Activated T-helper 1 cell treated with anti-CD3 and anti-CD28 coated beads, Interleukin-12 subunit alpha, Interleukin-12 subunit beta, Interleukin-2, Interleukin-4 antibody, amounts not matched to agents 30 ng/mL and 10 ng/mL and 1 ng/mL, durations not matched to agents 14 hours and 24 hours and 36 hours (primary cell): ENCODE measurements at regions of chr1 and their contacts with region 1.

Region 1: GRCh38 chr1:54715493-54716298 is at the start of gene TTC4:
- DNase-seq: peak; percentile 84
- H3K4me3 Mint-ChIP-seq: peak within 1 kb of the TSS; percentile 94
- H3K27ac Mint-ChIP-seq: peak within 1 kb of the TSS; percentile 77
- H3K4me1 Mint-ChIP-seq: peaks cover 31% of the 10 kb centered on the region
- H3K27me3 Mint-ChIP-seq: peaks cover 6% of the 10 kb centered on the region
- total RNA-seq, gene TTC4: 43.7 TPM in 2 replicates

Region 2: GRCh38 chr1:53220171-53220961 is 1495.3 kb before region 1 on chr1 and contains the start of gene CZIB:
- intact Hi-C with region 1: loop called (anchors 5 kb)
- DNase-seq: peak; percentile 92
- H3K4me3 Mint-ChIP-seq: peak within 1 kb of the TSS; percentile 90
- H3K27ac Mint-ChIP-seq: peak within 1 kb of the TSS; percentile 97
- H3K4me1 Mint-ChIP-seq: peaks cover 30% of the 10 kb centered on the region
- H3K27me3 Mint-ChIP-seq: peaks cover 2% of the 10 kb centered on the region
- total RNA-seq, gene CZIB: 43.6 and 45.2 TPM in 2 replicates

Region 3: DNA sequence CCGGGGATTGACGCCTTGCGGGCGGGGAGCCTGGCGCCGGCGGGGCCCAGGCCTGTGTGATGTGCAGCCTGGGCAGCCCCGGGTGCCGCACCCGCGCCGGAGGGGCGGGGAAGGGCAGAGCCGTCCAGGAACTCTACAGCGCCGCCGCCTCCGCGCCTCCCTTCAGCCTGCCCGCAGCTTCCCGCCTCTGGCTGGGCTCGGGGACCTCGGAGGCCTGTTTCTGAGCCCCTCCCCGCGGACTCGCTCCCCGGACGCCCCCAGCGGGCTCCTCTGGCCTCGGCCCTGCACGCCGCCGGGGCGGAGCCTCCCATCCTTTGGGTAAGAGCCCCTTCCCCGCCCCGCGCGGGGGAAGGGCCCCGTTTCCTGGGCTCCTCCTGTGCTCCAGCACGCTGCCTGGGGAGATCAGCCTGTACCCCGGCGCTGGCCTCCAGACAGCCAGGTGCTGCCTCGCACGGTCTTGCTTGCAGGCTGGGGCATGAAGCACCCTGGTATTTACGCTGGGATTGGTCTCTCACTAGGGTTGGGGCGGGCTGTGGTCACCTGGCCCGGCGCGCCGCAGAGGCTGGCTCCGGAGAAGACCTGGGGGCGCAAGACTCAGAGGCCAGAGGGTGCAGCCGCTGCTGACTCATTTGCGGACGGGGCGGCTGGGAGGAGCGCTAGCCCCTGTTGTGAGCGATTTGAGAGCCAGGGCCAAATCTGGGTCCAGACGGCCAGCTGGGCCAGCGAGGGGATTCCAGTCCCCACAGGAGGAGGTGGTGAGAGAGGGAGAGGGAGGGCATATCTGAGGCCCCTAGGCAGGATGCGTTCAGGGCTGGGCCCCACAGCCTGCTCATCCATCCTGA is 173.4 kb before region 1 on chr1:
- intact Hi-C with region 1: loop called (anchors 1 kb)
- DNase-seq: peak; percentile 55
- H3K4me3 Mint-ChIP-seq: peak overlapping the region; percentile 75
- H3K27ac Mint-ChIP-seq: peak overlapping the region; percentile 49
- H3K4me1 Mint-ChIP-seq: no peaks in the 10 kb centered on the region
- H3K27me3 Mint-ChIP-seq: peaks cover 9% of the 10 kb centered on the region

Region 4: DNA sequence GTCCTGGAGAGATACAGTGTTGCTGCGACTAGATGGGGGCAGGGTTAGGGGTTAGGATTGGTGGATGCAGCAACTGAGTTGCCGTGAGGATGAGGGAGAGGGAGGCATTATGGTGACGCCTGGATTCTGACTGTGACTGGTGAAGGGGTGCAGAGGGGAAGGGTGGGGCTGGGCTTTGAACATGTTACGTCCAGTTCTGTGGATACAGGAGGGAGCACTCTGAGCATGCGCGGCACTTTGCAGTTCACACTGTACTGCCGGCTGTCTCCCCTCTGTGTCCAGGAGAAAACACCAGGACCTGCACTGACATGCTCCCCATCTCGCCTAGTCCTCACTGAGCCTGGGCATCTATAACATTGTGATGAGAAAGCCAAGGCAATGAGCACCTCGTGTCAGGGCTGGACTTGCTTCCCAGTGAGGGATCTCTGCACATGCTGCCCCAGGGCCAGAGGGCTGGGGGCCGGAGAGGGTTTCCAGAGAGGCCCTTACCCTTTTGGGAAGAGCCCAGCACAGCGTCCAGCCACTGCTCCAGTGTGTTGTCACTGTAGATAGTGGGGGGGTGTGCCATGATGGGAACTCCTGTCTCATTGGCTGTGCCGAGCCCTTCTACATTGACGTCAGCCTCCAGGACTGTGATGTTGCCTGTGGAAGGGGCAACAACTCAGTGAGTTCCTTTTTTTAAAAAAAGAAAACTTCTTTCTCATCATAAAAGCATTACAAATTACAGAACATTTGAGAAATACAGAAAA is 100.0 kb before region 1 on chr1:
- intact Hi-C with region 1: no loop called
- DNase-seq: no peak
- H3K4me3 Mint-ChIP-seq: no peak overlapping the region
- H3K27ac Mint-ChIP-seq: no peak overlapping the region
- H3K4me1 Mint-ChIP-seq: no peaks in the 10 kb centered on the region
- H3K27me3 Mint-ChIP-seq: no peaks in the 10 kb centered on the region

Region 5: GRCh38 chr1:54671985-54672608 is 43.6 kb before region 1 on chr1:
- intact Hi-C with region 1: loop called (anchors 1 kb)
- DNase-seq: peak; percentile 59
- H3K4me3 Mint-ChIP-seq: no peak overlapping the region
- H3K27ac Mint-ChIP-seq: no peak overlapping the region
- H3K4me1 Mint-ChIP-seq: no peaks in the 10 kb centered on the region
- H3K27me3 Mint-ChIP-seq: peaks cover 6% of the 10 kb centered on the region

Region 6: GRCh38 chr1:54764133-54764921 is 48.6 kb after region 1 on chr1 and contains the start of gene PARS2:
- intact Hi-C with region 1: loop called (anchors 1 kb)
- DNase-seq: peak; percentile 94
- H3K4me3 Mint-ChIP-seq: peak within 1 kb of the TSS; percentile 90
- H3K27ac Mint-ChIP-seq: peak within 1 kb of the TSS; percentile 95
- H3K4me1 Mint-ChIP-seq: peaks cover 32% of the 10 kb centered on the region
- H3K27me3 Mint-ChIP-seq: no peaks in the 10 kb centered on the region
- total RNA-seq, gene PARS2: 5.9 and 6.7 TPM in 2 replicates

Region 7: DNA sequence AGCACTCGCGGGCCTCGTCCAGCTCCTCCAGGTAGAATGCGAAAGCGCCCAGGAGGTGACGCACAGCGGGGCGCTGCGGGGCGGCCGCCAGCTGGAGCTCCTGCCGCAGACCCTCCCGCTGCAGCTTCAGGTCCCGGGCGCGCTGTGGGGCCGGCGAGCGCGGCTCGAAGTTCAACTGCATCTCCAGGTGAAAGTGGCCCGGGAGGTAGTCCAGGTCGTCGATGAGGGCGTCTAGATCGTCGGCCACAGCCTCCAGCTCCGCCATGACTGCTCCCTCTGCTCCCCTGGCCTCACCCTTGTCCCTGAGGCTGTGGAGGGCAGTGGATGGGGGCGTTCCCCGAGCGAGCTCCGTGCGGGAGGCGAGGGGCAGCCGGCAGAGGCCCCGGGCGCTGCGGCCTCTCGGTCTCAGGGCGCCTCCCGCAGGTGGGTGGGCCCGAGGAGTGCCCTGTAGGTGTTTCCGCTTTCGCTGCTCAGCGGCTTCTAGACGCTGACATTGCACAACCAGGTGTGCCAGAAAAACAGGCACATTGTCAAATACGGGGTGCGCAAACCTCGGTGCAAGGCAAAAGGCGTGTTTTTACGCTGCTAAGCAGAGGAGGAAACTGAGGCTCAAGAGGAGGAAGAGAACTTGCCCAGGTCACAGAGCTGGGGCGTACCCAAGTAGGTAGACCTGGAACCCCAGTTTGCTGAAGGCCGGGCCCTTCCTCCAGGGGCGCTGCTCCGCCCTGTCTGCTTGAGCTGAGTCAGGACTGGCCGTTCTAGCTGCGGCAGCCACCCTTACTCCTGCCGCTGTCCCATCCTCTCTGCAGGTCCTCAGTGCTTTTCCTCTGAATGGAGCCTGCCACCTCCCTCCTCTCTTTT is 85.4 kb after region 1 on chr1 and contains the start of gene TTC22:
- intact Hi-C with region 1: loop called (anchors 1 kb)
- DNase-seq: peak; percentile 56
- H3K4me3 Mint-ChIP-seq: peak within 1 kb of the TSS; percentile 85
- H3K27ac Mint-ChIP-seq: peak within 1 kb of the TSS; percentile 80
- H3K4me1 Mint-ChIP-seq: peaks cover 65% of the 10 kb centered on the region
- H3K27me3 Mint-ChIP-seq: no peaks in the 10 kb centered on the region
- total RNA-seq, gene TTC22: 2.2 and 2.3 TPM in 2 replicates

Region 8: DNA sequence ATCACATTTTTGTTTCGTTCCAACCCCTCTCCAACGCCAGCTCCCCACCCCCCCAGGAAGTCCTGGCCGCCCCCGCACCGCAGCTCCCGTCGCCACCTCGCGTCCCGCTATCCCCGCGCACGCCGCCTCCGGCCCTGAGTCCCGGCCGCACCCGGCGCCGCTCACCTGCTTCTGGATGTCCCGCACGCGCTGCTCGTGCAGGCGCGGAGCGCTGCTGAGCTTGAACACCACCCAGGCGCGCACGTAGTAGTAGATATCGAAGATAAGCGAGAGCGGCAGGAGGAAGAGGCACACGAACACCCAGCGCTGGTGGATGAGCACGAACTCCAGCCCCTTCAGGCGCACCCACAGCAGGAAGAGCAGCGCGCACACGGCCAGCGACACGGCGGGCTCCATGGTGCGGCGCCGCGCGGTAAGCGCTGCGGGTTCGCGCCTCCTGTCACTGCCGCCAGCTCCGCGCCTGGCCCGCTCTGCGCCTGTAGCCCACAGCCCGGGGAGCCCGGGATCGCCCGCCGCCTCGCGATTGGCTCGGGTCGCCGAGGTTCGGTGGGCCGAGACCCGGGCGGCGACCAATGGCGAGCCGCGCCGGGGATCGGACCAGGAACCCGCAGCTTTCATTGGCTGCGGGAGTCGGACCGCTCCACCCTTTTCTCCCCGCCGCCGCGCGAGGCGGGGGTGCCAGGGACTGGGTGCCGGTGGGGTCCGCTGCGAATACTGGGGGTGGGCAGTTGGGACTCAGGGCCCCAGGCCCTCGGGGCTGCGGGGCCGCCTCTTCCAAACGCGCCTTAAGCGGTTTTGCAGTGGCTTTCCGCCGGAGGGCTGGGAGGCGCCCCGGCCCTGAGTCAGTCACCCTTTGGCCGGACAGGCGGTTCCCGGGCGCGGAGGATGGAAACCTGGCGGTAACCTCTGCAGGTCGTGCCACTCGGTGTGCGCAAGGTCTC is 171.3 kb after region 1 on chr1 and contains the start of gene DHCR24:
- intact Hi-C with region 1: loop called (anchors 1 kb)
- DNase-seq: peak; percentile 85
- H3K4me3 Mint-ChIP-seq: peak within 1 kb of the TSS; percentile 96
- H3K27ac Mint-ChIP-seq: peak within 1 kb of the TSS; percentile 87
- H3K4me1 Mint-ChIP-seq: peaks cover 56% of the 10 kb centered on the region
- H3K27me3 Mint-ChIP-seq: peaks cover 10% of the 10 kb centered on the region
- total RNA-seq, gene DHCR24: 206 and 211 TPM in 2 replicates